ENCODE measurements at regions of chr21 and their contacts with region 1.

Region 1: GRCh38 chr21:36692835-36693488 is 6.0 kb upstream of the SIM2 start:
- DNase-seq: no peak
- H3K4me3 ChIP-seq: no peak overlapping the region
- H3K27ac ChIP-seq: no peak overlapping the region
- H3K4me1 ChIP-seq: peaks cover 4% of the 10 kb centered on the region
- H3K27me3 ChIP-seq: peaks cover 87 to 97% of the 10 kb centered on the region in 2 experiments
- CTCF ChIP-seq: peak; percentile 23 to 29
- POLR2A ChIP-seq: no peak

Region 2: DNA sequence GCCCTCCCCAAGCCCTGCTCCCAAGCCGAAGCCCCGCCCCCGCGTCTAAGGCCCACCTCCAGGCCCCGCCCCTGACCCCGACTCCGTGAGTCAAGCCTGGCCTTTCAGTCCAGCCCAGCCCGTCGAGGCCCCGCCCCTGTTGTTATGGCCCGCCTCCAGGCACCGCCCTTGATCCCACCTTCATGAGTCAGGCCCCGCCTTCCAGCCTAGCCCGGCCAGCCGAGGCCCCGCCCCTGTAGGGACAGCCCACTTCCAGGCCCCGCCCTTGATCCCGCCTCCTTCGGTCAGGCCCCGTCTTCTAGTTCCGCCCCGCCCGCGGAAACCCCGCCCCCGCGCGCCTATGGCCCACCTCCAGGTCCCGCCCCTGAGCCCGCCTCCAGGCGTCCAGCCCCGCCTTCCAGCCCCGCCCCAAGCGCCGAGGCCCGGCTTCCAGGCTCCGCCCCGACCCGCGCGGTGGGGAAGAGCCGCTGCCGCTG is 536.6 kb before region 1 on chr21:
- CTCF ChIA-PET with region 1: no interaction called
- POLR2A ChIA-PET with region 1: no interaction called
- dilution Hi-C with region 1: no loop called
- intact Hi-C with region 1: no loop called
- DNase-seq: peak; percentile 100
- H3K4me3 ChIP-seq: peak overlapping the region; percentile 62 to 92 (median 72)
- H3K27ac ChIP-seq: no peak overlapping the region
- H3K4me1 ChIP-seq: peaks cover 11% of the 10 kb centered on the region
- H3K27me3 ChIP-seq: peaks cover 2 to 5% of the 10 kb centered on the region in 2 experiments
- CTCF ChIP-seq: no peak
- POLR2A ChIP-seq: no peak

Region 3: DNA sequence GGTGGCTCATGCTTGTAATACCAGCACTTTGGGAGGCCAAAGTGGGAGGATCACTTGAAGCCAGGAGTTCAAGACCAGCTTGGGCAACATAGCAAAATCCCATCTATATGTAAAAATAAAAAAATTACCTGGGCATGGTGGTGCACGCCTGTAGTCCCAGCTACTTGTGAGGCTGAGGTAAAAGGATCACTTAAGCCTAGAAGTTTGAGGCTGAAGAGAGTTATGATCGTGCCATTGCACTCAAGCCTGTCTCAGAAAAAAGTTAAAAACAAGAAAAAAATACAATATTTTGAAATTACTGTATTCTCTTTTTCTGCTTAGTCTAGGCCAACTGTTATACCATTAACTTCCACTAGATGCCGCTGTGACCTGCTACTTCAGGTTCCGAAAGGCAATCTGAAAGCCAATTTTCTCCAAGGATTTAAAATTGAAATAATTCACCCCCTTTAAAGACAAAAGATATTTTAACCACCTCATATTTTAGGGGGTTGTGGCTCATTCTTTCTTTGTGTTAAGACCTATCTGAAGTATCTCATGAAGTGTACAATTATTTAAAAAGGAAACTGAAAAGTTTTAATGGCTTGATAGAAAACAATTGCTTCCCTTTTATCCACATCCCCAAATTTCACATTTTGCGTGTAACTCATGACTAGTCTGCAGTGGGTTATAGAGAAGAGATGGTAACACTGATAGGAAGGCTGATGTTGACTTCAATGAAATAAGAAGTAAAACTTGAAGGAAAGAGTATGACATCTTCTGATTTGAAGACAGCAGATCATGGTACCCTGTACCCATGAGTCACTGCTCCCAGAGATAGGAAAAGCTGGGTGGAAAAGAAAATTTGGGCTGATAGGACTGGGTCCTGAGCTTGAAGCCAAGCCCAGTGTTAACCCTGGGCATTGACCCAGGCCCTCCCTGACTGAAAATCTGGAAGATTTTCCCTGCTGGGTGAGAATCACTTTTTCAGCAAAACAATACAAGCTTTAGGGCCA is 188.6 kb before region 1 on chr21:
- CTCF ChIA-PET with region 1: no interaction called
- POLR2A ChIA-PET with region 1: no interaction called
- dilution Hi-C with region 1: no loop called
- intact Hi-C with region 1: loop called (anchors 1 kb)
- DNase-seq: peak; percentile 55
- H3K4me3 ChIP-seq: no peak overlapping the region
- H3K27ac ChIP-seq: no peak overlapping the region
- H3K4me1 ChIP-seq: no peaks in the 10 kb centered on the region
- H3K27me3 ChIP-seq: no peaks in the 10 kb centered on the region
- CTCF ChIP-seq: peak; percentile 61 to 67
- POLR2A ChIP-seq: no peak

Region 4: DNA sequence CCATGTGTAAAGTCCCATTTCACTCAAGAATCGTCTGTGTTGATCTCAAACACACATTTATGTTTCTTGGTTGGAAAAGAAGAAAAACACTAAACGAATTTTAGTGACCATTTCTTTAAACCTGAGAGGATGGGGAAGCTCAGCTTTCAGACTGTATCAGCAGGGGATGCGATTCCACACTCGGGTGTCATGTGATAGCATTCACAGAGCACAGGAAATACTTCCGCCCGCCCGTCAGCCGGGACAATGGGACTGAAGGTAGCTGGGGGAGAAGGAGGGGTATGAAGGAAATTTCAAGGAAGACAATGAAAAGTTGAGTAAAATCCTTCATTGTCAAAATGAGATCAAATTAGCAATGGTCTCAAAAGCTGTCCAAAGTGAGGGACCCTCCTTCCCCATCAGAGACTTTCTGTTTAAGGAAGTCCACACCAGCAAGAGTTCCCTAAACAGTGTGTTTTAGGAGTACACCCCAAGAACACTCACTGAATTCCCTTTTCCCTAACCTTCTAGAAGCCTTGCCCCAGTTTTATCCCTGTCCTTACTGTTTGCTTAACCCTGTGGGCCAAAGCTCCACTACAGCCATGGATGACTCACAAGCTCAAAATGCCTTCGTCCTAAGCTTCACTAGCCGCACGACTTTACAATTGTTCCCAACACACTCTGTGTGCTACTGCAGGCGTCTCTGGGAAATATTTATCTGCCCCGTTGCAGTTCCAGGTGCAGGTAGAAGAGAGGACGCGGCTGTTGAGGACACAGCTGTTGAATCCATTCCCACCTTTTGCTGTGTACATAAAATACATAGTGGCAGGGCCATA is 45.5 kb before region 1 on chr21:
- CTCF ChIA-PET with region 1: no interaction called
- POLR2A ChIA-PET with region 1: no interaction called
- dilution Hi-C with region 1: no loop called
- intact Hi-C with region 1: loop called (anchors 5 kb)
- DNase-seq: peak; percentile 65
- H3K4me3 ChIP-seq: no peak overlapping the region
- H3K27ac ChIP-seq: peak overlapping the region; percentile 77
- H3K4me1 ChIP-seq: peaks cover 20% of the 10 kb centered on the region
- H3K27me3 ChIP-seq: no peaks in the 10 kb centered on the region
- CTCF ChIP-seq: no peak
- POLR2A ChIP-seq: no peak

Region 5: DNA sequence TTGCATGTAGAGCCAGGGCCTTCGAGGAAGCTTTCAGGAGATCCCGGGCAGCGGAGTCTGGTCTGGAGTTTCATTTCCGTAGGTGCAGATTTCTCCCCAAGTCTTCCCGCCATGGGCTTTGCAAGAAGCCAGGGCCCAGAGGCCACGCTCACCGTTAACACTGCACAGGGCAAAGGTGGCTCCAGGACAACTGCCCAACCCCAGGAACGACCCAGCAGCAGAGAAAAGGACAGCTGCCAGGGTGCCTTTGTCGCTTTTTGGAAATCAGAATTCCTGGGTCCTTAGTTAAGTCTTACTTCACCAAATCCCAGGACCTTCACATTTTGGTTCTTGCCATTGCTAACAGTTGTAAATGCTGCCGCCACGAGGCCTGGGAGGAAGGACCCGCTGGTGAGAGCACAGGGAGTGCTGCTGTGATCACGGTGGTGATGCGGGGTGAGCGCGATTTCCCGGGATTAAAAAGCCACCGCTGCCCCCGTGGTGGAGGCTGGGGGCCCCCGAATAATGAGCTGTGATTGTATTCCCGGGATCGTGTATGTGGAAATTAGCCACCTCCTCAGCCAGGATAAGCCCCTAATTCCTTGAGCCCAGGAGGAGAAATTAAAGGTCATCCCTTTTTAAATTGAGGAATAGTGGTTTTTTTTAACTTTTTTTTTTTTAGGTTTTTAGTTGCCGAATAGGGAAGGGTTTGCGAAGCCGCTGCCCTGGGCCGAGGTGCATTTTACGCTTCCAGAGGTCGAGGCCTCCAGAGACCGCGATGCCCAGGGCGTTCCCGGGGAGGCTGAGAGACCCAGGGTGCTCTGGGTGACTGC is 14.2 kb after region 1 on chr21:
- CTCF ChIA-PET with region 1: interaction called, 3 read pairs
- POLR2A ChIA-PET with region 1: no interaction called
- dilution Hi-C with region 1: no loop called
- intact Hi-C with region 1: loop called (anchors 2 kb)
- DNase-seq: no peak
- H3K4me3 ChIP-seq: no peak overlapping the region
- H3K27ac ChIP-seq: no peak overlapping the region
- H3K4me1 ChIP-seq: no peaks in the 10 kb centered on the region
- H3K27me3 ChIP-seq: peaks cover 92 to 100% of the 10 kb centered on the region in 2 experiments
- CTCF ChIP-seq: no peak
- POLR2A ChIP-seq: no peak

Measured in endothelial cell of umbilical vein (primary cell).